HEK293T (cell line): ENCODE measurements at regions of chr5 and their contacts with region 1.

Region 1: GRCh38 chr5:90581956-90582355 is 23.4 kb downstream of the ADGRV1 start:
- DNase-seq: no peak

Region 2: GRCh38 chr5:90446961-90447360 is 135.0 kb before region 1 on chr5:
- CTCF ChIA-PET with region 1: no interaction called
- POLR2A ChIA-PET with region 1: no interaction called
- DNase-seq: no peak

Region 3: GRCh38 chr5:90606539-90606938 is 24.6 kb after region 1 on chr5:
- CTCF ChIA-PET with region 1: interaction called, 10 read pairs
- POLR2A ChIA-PET with region 1: no interaction called
- DNase-seq: no peak

Region 4: DNA sequence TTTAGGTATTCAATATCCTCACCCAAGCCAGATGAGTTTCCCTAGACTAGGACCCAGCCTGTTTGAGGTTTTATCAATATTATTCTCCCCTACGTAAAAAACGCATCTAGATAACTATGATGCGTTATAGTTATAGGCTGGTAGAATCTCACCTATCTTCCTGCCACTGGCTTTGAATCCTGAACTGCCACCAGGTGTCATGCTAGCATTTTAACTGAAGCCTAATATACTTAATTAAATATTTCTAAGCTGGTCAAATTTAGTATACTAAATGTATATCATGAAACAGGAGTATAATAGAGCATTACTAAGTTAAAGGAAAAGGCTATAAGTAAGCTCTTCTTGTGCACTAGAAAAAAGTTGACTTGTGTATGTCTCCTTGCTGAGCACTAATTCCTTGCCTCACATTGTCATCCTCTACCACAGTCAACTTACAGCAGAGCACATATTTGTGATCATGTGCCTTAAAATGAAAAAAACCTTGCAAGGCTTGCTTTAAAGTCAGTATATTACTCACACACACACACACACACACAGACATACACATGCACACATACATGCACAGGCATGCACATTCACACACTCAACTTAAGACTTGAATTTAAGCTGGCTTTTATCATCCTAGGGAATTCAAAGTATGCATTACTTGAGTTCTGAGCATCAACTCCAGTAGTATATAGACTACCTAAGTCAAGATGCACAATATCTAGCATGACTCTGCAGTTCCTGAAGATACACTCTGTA is 280.1 kb after region 1 on chr5:
- CTCF ChIA-PET with region 1: no interaction called
- POLR2A ChIA-PET with region 1: no interaction called
- DNase-seq: no peak